Tibial artery (tissue), 4 donors: ENCODE measurements at regions of chr13 and their contacts with region 1.

Region 1: DNA sequence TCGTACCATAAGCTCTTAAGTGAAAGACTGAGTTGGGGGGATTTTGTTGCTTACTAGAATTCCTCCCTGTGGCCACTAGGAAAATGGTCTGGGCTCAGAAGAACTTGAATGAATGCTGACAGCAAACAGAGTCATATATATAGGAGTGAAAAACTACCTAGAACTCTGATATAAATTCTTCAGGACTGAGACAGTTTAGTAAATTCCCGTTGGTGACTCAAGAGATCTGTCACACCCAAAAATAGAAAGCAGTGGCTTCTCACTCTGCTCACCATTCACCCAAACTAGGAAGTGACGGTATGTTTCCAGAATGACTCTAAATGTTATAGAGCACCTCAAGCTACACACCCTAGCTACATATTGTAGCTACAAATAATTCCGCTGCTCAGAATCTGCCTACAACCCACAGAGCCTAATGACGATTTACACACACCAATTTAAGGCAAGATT is 116.2 kb downstream of the TBC1D4 start:
- DNase-seq: no peak
- H3K4me3 ChIP-seq: no peak overlapping the region
- H3K27ac ChIP-seq: no peak overlapping the region
- H3K4me1 ChIP-seq: peaks cover 0 to 36% (median 8%) of the 10 kb centered on the region in 4 donors
- H3K27me3 ChIP-seq: no peaks in the 10 kb centered on the region
- CTCF ChIP-seq: peak in 1 of 2 experiments; percentile 5

Region 2: GRCh38 chr13:75635828-75636435 is 270.2 kb after region 1 on chr13 and contains the start of gene LMO7:
- intact Hi-C with region 1: loop called (anchors 10 kb)
- DNase-seq: peak; percentile 45 to 80
- H3K4me3 ChIP-seq: peak within 1 kb of the TSS; percentile 59 to 76
- H3K27ac ChIP-seq: peak within 1 kb of the TSS; percentile 83 to 84
- H3K4me1 ChIP-seq: peaks cover 0 to 29% (median 3%) of the 10 kb centered on the region in 4 donors
- H3K27me3 ChIP-seq: no peaks in the 10 kb centered on the region
- CTCF ChIP-seq: no peak